ENCODE measurements at regions of chr1 and their contacts with region 1.

Region 1: DNA sequence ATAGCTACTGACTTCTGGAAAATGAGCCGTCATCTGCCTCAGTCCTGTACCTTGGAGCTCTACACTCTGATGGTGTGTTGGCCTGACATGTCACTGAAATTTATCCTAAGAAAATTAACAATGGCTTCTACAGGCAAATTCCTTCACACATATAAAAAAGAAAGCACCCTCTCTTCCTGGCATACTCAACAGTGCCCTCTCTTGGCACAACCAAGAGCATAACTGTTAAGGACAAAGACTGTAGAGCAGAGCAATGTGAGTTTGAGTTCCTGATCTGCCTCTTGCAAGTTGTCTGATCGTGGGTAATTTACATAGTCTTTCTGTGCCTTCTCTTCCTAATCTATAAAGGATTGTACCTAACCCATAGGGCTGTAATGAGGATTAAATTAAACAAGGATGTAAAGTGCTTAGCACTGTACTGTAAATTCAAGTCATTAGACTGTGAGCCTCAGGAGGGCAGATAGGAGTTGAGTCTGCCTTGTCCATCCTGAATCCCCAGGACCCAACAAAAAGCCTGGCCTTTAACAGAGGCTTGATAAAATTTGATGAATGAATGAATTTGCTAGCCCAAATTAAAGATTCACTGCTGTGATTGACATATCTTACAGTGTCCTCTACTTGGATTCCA is 83.5 kb downstream of the SYF2 start:
- DNase-seq: peak; percentile 56
- ATAC-seq: peak; percentile 86
- H3K4me3 Mint-ChIP-seq: no peak overlapping the region
- H3K27ac Mint-ChIP-seq: no peak overlapping the region
- H3K4me1 Mint-ChIP-seq: no peaks in the 10 kb centered on the region
- H3K27me3 Mint-ChIP-seq: peaks cover 22% of the 10 kb centered on the region

Region 2: GRCh38 chr1:25022361-25023189 is 126.2 kb before region 1 on chr1:
- CTCF ChIA-PET with region 1: no interaction called
- POLR2A ChIA-PET with region 1: no interaction called
- intact Hi-C with region 1: no loop called
- DNase-seq: peak; percentile 97
- ATAC-seq: peak; percentile 84
- H3K4me3 Mint-ChIP-seq: peak overlapping the region; percentile 77
- H3K27ac Mint-ChIP-seq: peak overlapping the region; percentile 99
- H3K4me1 Mint-ChIP-seq: peaks cover 92% of the 10 kb centered on the region
- H3K27me3 Mint-ChIP-seq: no peaks in the 10 kb centered on the region

Region 3: GRCh38 chr1:25117233-25117823 is 31.5 kb before region 1 on chr1:
- CTCF ChIA-PET with region 1: interaction called, 18 read pairs
- POLR2A ChIA-PET with region 1: no interaction called
- intact Hi-C with region 1: loop called in 1 of 2 experiments (anchors 2 kb)
- DNase-seq: peak; percentile 70
- ATAC-seq: no peak
- H3K4me3 Mint-ChIP-seq: no peak overlapping the region
- H3K27ac Mint-ChIP-seq: no peak overlapping the region
- H3K4me1 Mint-ChIP-seq: peaks cover 28% of the 10 kb centered on the region
- H3K27me3 Mint-ChIP-seq: peaks cover 4% of the 10 kb centered on the region

Region 4: DNA sequence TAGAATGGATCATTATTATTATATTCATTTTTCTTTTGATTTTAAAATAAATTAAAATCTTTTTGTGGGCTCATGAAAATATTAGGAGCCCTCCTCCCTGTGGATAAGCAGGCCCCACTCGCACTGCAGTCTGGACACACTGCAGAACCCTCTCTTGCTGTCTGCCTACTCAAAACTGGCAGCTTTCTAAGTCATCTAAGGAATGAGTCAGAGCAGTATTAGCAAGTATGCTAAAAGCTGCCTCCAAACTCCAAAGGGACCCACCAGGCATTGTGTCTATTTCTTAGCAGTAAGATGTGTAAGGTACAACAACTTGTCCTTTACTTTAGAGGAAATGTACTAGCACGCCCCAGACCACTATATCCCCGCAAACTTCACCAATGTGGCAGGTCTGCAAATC is 25.2 kb before region 1 on chr1:
- CTCF ChIA-PET with region 1: interaction called, 18 read pairs
- POLR2A ChIA-PET with region 1: no interaction called
- intact Hi-C with region 1: loop called in 1 of 2 experiments (anchors 2 kb)
- DNase-seq: peak; percentile 52
- ATAC-seq: peak; percentile 78
- H3K4me3 Mint-ChIP-seq: no peak overlapping the region
- H3K27ac Mint-ChIP-seq: no peak overlapping the region
- H3K4me1 Mint-ChIP-seq: peaks cover 29% of the 10 kb centered on the region
- H3K27me3 Mint-ChIP-seq: no peaks in the 10 kb centered on the region